ENCODE measurements at regions of chr7 and their contacts with region 1.

Region 1: GRCh38 chr7:100132697-100133151 is 6.0 kb downstream of the MBLAC1 start:
- DNase-seq: peak; percentile 44
- H3K4me3 ChIP-seq: no peak overlapping the region
- H3K27ac ChIP-seq: no peak overlapping the region
- H3K4me1 ChIP-seq: no peaks in the 10 kb centered on the region
- H3K27me3 ChIP-seq: no peaks in the 10 kb centered on the region
- CTCF ChIP-seq: peak; percentile 37 to 85 (median 78)
- POLR2A ChIP-seq: no peak

Region 2: DNA sequence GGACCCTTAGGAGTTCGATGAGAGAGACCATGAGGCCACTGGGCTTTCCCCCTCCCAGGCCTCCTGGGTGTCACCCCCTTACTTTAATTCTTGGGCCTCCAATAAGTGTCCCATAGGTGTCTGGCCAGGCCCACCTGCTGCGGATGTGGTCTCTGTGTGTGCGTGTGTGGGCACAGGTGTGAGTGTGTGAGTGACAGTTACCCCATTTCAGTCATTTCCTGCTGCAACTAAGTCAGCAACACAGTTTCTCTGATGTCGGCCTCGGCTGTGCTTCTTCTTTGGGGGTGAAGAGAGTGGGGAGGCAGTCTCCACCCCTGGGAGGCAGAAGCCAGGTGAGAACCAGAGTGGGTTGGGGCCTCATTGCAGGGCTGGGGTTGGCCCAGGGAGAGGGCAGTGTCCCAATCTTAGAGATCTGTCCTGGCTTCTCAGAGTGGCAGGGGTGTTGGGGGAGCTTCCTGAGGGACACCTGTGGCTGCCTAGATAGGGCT is 88.6 kb after region 1 on chr7:
- intact Hi-C with region 1: loop called (anchors 5 kb)
- DNase-seq: no peak
- H3K4me3 ChIP-seq: no peak overlapping the region
- H3K27ac ChIP-seq: no peak overlapping the region
- H3K4me1 ChIP-seq: no peaks in the 10 kb centered on the region
- H3K27me3 ChIP-seq: no peaks in the 10 kb centered on the region
- CTCF ChIP-seq: no peak
- POLR2A ChIP-seq: no peak

Region 3: GRCh38 chr7:100266576-100267354 is 134.0 kb after region 1 on chr7:
- intact Hi-C with region 1: no loop called
- DNase-seq: no peak
- H3K4me3 ChIP-seq: no peak overlapping the region
- H3K27ac ChIP-seq: no peak overlapping the region
- H3K4me1 ChIP-seq: no peaks in the 10 kb centered on the region
- H3K27me3 ChIP-seq: no peaks in the 10 kb centered on the region
- CTCF ChIP-seq: no peak
- POLR2A ChIP-seq: no peak

Region 4: GRCh38 chr7:100563809-100564400 is 431.2 kb after region 1 on chr7:
- intact Hi-C with region 1: no loop called
- DNase-seq: peak; percentile 76
- H3K4me3 ChIP-seq: no peak overlapping the region
- H3K27ac ChIP-seq: no peak overlapping the region
- H3K4me1 ChIP-seq: no peaks in the 10 kb centered on the region
- H3K27me3 ChIP-seq: no peaks in the 10 kb centered on the region
- CTCF ChIP-seq: peak; percentile 91 to 94 (median 92)
- POLR2A ChIP-seq: no peak

Region 5: GRCh38 chr7:100705753-100706671 is 573.3 kb after region 1 on chr7 and contains the start of gene POP7:
- intact Hi-C with region 1: no loop called
- DNase-seq: peak; percentile 98
- H3K4me3 ChIP-seq: peak within 1 kb of the TSS; percentile 75 to 84
- H3K27ac ChIP-seq: peak within 1 kb of the TSS; percentile 94 to 96
- H3K4me1 ChIP-seq: peaks cover 6% of the 10 kb centered on the region
- H3K27me3 ChIP-seq: no peaks in the 10 kb centered on the region
- CTCF ChIP-seq: no peak
- POLR2A ChIP-seq: peak; percentile 68
- total RNA-seq, gene POP7: 41.4 to 45.2 TPM

Measured in prostate gland (tissue), 2 donors.